ENCODE measurements at regions of chr17 and their contacts with region 1.

Region 1: DNA sequence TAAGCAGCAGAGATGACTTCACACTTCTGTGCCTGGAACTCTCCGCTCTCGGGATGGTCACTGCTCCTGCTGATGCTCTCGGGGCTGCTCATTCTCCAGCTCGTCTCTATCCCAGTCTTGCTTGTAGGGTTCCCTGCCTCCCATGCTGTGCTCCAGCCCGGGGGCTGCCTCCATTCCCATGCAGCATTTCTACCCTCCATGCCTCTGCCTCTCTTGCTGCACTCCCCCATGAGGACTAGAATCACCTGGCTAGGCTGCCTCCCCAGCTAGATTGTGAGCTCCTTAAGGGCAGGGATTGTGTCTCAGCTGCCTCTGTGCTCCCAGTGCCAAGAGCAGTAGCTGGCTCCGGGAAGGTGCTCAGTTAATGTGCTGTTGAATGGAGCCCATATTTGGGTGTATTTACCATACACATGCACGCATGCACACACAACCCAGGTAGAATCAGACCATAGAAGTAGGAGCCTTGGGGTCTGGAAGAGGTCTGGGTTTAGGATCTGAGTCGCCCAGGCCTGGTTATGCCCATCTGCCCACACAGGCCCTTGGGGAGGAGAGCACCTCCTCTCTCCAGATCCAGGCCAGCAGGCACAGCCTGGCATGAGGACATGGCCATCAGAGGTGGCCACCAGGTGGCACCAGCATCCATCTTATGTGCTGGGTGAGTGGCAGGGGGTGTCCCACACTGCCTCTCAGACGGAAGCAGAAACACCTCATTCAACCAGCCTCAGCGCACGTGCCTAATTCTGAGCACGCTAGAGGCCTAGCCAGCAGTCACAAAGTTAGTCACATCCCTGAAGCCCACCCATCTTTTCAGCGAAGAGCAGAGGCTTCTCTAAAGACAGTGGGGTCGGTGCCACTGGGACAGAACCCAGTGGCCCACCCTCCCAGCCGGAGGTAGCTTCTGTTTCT is 9.3 kb downstream of the GIT1 start:
- DNase-seq: peak; percentile 62 to 83
- ATAC-seq: peak; percentile 76 to 92
- H3K4me3 ChIP-seq: no peak overlapping the region
- H3K27ac ChIP-seq: peak overlapping the region in 3 of 4 donors; percentile 2 to 53 (median 31)
- H3K4me1 ChIP-seq: peaks cover 23 to 28% of the 10 kb centered on the region in 2 donors
- H3K27me3 ChIP-seq: no peaks in the 10 kb centered on the region
- CTCF ChIP-seq: peak; percentile 82 to 95 (median 94)
- POLR2A ChIP-seq: no peak

Region 2: GRCh38 chr17:29617125-29617480 is 37.0 kb after region 1 on chr17:
- in situ Hi-C with region 1: no loop called
- intact Hi-C with region 1: loop called (anchors 1 kb)
- DNase-seq: peak in 1 of 2 donors; percentile 65
- ATAC-seq: no peak
- H3K4me3 ChIP-seq: peak overlapping the region; percentile 32 to 94 (median 67)
- H3K27ac ChIP-seq: peak overlapping the region; percentile 98 to 100 (median 99)
- H3K4me1 ChIP-seq: peaks cover 74 to 83% of the 10 kb centered on the region in 2 donors
- H3K27me3 ChIP-seq: no peaks in the 10 kb centered on the region
- CTCF ChIP-seq: peak; percentile 16 to 55 (median 50)
- POLR2A ChIP-seq: no peak

Region 3: GRCh38 chr17:29645515-29646051 is 65.5 kb after region 1 on chr17:
- in situ Hi-C with region 1: no loop called
- intact Hi-C with region 1: no loop called
- DNase-seq: peak; percentile 95 to 97
- ATAC-seq: peak; percentile 55 to 65
- H3K4me3 ChIP-seq: no peak overlapping the region
- H3K27ac ChIP-seq: peak overlapping the region; percentile 97 to 100 (median 98)
- H3K4me1 ChIP-seq: peaks cover 62 to 68% of the 10 kb centered on the region in 2 donors
- H3K27me3 ChIP-seq: no peaks in the 10 kb centered on the region
- CTCF ChIP-seq: no peak
- POLR2A ChIP-seq: peak; percentile 18 to 46

Region 4: GRCh38 chr17:29777663-29778062 is 197.5 kb after region 1 on chr17:
- in situ Hi-C with region 1: loop called in 2 of 4 experiments (anchors 10 kb)
- intact Hi-C with region 1: loop called (anchors 2 kb)
- DNase-seq: no peak
- ATAC-seq: no peak
- H3K4me3 ChIP-seq: no peak overlapping the region
- H3K27ac ChIP-seq: peak overlapping the region in 1 of 4 donors; percentile 84
- H3K4me1 ChIP-seq: peaks cover 9 to 13% of the 10 kb centered on the region in 2 donors
- H3K27me3 ChIP-seq: no peaks in the 10 kb centered on the region
- CTCF ChIP-seq: no peak
- POLR2A ChIP-seq: no peak

Region 5: DNA sequence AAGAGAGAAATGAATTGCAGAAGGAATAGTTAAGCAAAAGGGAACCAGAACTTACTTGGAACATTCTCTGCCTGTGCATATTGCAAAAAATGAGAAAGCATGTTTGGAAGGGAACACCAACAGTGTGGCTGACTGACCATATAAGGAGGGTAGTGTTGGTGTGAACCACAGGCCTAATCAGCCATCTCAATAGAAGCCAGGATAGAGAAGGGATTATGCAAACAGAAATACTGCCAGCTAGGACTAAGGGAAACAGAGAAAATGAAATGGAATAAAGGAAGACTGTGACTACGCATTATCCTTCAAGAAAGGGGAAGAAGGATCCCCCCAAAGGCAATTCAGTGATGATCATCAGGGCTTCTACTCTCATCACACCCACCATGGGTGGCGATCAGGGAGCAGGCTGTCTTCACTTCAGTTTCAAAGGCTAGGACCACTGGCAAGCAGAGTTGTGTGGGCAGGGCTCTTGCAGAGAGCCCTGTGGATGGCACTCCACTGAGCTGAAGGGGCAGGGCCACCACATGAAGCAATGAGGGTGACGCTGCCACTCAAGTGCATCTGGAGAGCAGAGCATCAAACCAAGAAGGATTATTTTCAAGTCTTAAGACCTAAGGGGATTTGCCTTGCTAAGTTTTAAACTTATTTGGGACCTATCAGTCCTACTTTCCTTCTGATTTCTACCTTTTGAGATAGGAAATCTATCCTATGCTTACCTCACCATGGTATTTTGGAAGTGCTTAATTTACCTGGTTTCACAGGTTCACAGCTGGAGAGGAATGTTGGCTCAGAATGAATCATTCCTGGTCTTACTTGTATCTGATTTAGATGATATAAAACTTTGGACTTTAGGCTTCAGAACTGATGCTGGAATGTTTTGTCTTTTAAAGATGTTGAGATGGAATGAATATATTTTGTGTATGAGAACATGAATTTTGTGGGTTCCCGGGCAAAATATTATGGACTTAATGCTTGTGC is 209.4 kb after region 1 on chr17:
- in situ Hi-C with region 1: loop called in 2 of 4 experiments (anchors 10 kb)
- intact Hi-C with region 1: no loop called
- DNase-seq: no peak
- ATAC-seq: peak in 1 of 2 donors; percentile 34
- H3K4me3 ChIP-seq: no peak overlapping the region
- H3K27ac ChIP-seq: no peak overlapping the region
- H3K4me1 ChIP-seq: peaks cover 0 to 13% of the 10 kb centered on the region in 2 donors
- H3K27me3 ChIP-seq: no peaks in the 10 kb centered on the region
- CTCF ChIP-seq: no peak
- POLR2A ChIP-seq: no peak

Region 6: GRCh38 chr17:29931231-29931932 is 351.3 kb after region 1 on chr17:
- in situ Hi-C with region 1: loop called in 1 of 4 experiments (anchors 25 kb)
- intact Hi-C with region 1: loop called (anchors 2 kb)
- DNase-seq: peak; percentile 27 to 53
- ATAC-seq: peak; percentile 55 to 56
- H3K4me3 ChIP-seq: peak overlapping the region; percentile 79 to 95 (median 90)
- H3K27ac ChIP-seq: peak overlapping the region; percentile 93 to 98 (median 94)
- H3K4me1 ChIP-seq: peaks cover 33 to 39% of the 10 kb centered on the region in 2 donors
- H3K27me3 ChIP-seq: no peaks in the 10 kb centered on the region
- CTCF ChIP-seq: peak; percentile 73 to 92 (median 89)
- POLR2A ChIP-seq: no peak

Region 7: GRCh38 chr17:30021708-30022317 is 441.7 kb after region 1 on chr17:
- in situ Hi-C with region 1: no loop called
- intact Hi-C with region 1: loop called (anchors 10 kb)
- DNase-seq: no peak
- ATAC-seq: no peak
- H3K4me3 ChIP-seq: peak overlapping the region in 1 of 4 donors; percentile 10
- H3K27ac ChIP-seq: no peak overlapping the region
- H3K4me1 ChIP-seq: no peaks in the 10 kb centered on the region
- H3K27me3 ChIP-seq: no peaks in the 10 kb centered on the region
- CTCF ChIP-seq: peak; percentile 51 to 76 (median 58)
- POLR2A ChIP-seq: no peak

Region 8: GRCh38 chr17:30093463-30094147 is 513.5 kb after region 1 on chr17:
- in situ Hi-C with region 1: no loop called
- intact Hi-C with region 1: loop called (anchors 2 kb)
- DNase-seq: peak in 1 of 2 donors; percentile 20
- ATAC-seq: peak; percentile 55 to 67
- H3K4me3 ChIP-seq: no peak overlapping the region
- H3K27ac ChIP-seq: no peak overlapping the region
- H3K4me1 ChIP-seq: peaks cover 9 to 12% of the 10 kb centered on the region in 2 donors
- H3K27me3 ChIP-seq: peaks cover 0 to 14% (median 0%) of the 10 kb centered on the region in 3 donors
- CTCF ChIP-seq: peak; percentile 66 to 84 (median 74)
- POLR2A ChIP-seq: no peak